Cardiac septum (tissue), 1 donor: ENCODE measurements at regions of chr1 and their contacts with region 1.

Region 1: DNA sequence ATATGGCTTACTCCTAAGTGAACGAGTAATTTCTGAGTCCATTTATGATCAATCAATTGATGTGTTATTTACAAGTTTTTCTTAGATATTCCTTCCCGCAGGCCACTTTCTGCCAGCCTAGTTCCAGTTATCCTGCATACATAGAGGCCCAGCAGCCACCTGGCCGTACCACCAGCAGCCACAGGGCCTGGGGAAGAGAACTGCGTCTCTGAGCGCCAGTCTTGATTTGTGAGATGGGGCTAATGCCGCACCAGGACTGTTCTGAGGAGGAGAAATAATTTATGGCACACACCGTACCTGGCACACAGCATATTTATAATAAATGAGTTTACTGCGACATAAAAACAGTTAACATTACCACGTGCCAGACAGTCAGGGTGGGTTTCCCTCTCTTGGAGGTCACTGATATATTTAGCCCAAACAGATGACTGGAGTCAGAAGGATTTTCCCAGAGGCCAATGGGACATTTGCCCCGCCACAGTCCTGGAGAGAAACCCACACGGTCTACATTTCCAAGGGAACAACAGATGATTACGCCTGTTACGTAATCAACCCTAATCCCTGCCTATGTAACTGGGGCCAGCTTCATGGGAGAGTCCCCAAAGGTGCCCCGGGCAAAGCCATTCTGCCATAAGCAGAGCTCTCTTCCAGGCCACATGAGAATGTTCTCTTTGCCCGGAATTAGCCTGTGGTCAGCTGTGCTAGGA is 38.1 kb downstream of the DHRS3 start:
- DNase-seq: no peak

Region 2: GRCh38 chr1:12539705-12540579 is 40.0 kb before region 1 on chr1:
- intact Hi-C with region 1: loop called (anchors 2 kb)
- DNase-seq: peak; percentile 85